ENCODE measurements at regions of chr9 and their contacts with region 1.

Region 1: GRCh38 chr9:6412487-6413364 is at the start of gene UHRF2:
- DNase-seq: peak; percentile 97 to 99
- H3K4me3 ChIP-seq: peak within 1 kb of the TSS; percentile 97 to 98
- H3K27ac ChIP-seq: peak within 1 kb of the TSS; percentile 86 to 92
- H3K4me1 ChIP-seq: peaks cover 6% of the 10 kb centered on the region in 2 donors
- H3K27me3 ChIP-seq: no peaks in the 10 kb centered on the region
- CTCF ChIP-seq: peak in 1 of 3 experiments; percentile 21
- total RNA-seq, gene UHRF2: 22.8 TPM

Region 2: DNA sequence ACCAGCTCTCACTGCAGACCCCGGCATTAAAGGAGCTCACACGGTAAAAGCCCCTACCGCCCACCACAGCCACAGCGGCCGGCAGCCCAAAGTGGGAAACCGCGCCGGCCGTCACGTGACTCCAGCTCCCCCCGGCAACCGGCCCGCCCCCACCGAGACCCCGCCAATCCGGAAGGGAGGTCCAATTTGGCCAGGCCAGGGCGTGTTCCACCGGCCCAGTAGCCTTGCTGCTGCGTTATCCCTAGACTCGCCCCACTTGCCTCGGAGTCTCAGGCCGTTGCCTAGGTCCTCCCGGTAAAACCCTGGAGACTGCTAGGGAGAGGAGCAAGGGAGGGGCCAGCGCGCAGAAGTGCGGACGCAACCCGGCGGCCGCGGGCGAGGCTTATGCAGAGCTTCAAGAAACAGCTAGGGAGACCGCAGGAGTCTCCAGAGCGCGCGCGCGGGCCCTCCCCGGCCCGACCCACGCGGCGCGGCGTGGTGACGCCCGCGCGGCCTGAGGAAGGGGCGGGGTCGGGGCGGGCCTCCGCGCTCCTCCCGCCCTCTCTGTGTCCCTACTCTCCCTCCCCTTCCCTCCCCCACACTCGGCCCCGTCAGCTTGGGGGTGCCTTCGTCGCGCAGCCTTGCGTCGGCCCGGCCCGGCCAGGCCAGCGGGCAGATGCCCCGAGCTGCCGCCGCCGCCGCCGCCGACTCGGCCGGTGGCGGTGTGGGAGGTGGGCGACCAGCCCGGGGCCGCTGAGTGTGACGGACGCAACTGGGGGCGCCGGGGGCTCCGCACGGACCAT is 784.0 kb before region 1 on chr9 and contains the start of gene RIC1:
- intact Hi-C with region 1: loop called (anchors 10 kb)
- DNase-seq: peak; percentile 77 to 95
- H3K4me3 ChIP-seq: peak within 1 kb of the TSS; percentile 93 to 98
- H3K27ac ChIP-seq: peak within 1 kb of the TSS; percentile 95 to 99
- H3K4me1 ChIP-seq: peaks cover 5 to 43% of the 10 kb centered on the region in 2 donors
- H3K27me3 ChIP-seq: no peaks in the 10 kb centered on the region
- CTCF ChIP-seq: no peak
- total RNA-seq, gene RIC1: 46.7 TPM

Region 3: GRCh38 chr9:6126374-6126773 is 286.4 kb before region 1 on chr9:
- intact Hi-C with region 1: no loop called
- DNase-seq: no peak
- H3K4me3 ChIP-seq: no peak overlapping the region
- H3K27ac ChIP-seq: no peak overlapping the region
- H3K4me1 ChIP-seq: no peaks in the 10 kb centered on the region
- H3K27me3 ChIP-seq: no peaks in the 10 kb centered on the region
- CTCF ChIP-seq: no peak

Region 4: DNA sequence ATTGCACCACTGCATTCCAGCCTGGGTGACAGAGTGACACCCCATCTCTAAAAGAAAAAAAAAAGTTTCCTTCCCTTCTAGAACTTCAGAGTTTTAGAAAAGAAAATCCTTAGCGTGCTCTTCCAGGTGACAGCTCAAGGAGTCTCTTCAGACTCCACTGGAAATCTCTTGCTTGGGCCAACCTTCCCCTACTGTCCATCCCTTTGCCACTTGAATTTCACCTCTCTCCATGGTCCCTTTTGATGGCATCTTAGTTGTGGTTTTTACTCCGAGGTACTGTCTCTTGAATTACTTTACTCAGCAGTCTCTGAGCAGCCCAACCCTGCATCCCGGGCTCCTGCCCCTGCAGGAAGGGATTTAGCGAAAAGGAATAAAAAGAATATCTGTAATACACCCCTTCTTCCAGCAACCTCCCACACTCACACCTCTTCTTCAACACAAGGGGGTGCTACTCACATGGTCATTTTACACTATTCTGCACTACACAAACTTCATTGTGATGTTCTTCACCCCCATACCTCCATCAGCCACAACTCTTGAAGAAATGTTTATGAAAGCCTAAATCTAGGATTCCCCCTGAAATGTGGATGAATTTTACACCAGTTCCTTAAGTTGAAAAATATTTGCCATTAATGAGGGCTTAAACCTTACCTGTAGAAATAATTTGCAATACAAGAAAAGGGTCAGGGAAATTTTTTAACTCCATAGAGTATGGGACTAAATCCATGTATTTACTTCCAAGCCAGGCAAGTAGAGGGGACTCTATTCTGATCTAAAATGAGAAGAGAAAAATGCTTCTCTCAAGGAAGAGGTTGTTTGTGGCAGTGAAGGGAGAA is 58.7 kb before region 1 on chr9:
- intact Hi-C with region 1: loop called (anchors 2 kb)
- DNase-seq: no peak
- H3K4me3 ChIP-seq: no peak overlapping the region
- H3K27ac ChIP-seq: no peak overlapping the region
- H3K4me1 ChIP-seq: no peaks in the 10 kb centered on the region
- H3K27me3 ChIP-seq: no peaks in the 10 kb centered on the region
- CTCF ChIP-seq: peak; percentile 52 to 75 (median 63)

Region 5: DNA sequence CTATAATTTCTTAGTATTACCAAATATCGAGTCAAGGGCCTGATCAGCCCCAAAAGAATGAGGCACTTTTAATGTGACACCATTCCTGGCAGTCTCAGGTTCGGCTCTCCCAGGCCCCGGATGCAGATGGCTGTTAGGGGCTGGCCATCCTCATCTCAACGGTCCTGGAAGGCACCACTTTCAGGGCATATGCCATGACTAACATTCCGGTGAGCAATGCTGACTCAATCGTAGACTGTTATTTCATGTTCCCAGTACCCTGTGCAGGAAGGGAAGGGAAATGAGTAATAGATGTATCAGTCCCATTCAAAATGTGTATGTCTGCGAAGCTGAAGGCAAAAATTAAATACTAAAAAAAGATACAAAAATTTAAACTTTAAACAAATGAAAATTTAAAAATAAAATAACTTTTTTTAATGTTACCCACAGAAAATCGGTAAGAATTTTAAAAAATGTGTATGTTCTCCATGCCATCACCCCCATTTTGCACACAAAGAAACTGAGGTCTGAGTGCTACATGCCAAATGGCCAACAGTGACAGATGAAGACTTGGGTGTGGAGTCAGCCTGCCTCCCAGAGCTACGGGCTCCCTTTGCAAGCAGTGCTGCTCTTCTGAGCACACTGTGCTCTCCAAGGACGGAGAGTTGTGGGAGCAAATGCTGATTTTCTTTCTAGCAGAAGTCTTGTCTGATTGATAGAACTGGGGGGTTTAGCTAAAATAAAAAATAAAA is 153.8 kb after region 1 on chr9:
- intact Hi-C with region 1: loop called (anchors 2 kb)
- DNase-seq: peak; percentile 40 to 88
- H3K4me3 ChIP-seq: peak overlapping the region in 1 of 2 donors; percentile 27
- H3K27ac ChIP-seq: peak overlapping the region; percentile 72 to 84
- H3K4me1 ChIP-seq: peaks cover 0 to 14% of the 10 kb centered on the region in 2 donors
- H3K27me3 ChIP-seq: no peaks in the 10 kb centered on the region
- CTCF ChIP-seq: no peak

Region 6: DNA sequence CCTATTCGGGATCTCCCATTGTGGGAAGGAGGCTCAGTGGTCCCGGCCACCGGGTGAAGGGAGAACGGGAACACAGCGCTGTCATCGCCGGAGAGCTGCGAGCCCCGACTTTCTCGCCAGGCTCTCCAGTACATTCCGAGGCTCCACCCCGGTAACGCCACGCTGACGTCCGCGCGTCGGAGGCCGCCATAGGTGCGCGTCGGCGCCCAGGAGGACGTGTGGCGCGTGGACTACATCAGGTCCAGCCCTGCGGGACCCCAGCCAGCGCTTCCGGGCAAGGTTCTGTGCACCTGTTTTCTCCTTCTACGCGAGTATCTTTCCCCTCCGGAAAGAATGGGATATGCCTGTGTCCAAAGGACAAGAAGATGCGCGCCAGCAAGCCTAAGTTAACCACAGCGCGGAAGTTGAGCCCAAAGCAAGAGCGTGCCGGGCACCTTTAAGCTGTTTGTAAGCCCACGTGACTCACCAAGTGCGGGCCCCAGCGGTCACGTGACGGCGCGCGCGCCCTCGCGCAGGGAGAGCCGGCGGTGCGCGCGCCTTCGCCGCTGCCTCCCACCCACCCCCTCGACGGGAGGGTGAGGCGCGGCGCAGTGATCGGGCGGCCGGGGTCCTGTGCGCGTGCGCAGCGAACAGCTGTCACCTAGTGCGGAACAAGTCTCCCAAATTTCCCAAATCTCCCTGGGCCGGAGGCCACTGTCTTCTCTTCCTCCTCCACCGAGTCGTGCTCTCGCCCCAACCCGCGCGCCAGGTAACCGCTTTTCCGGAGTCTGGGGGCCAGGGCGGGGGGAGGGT is 344.9 kb after region 1 on chr9 and contains the start of gene KDM4C:
- intact Hi-C with region 1: loop called (anchors 2 kb)
- DNase-seq: peak; percentile 88 to 98
- H3K4me3 ChIP-seq: peak within 1 kb of the TSS; percentile 66 to 98
- H3K27ac ChIP-seq: peak within 1 kb of the TSS; percentile 98 to 99
- H3K4me1 ChIP-seq: peaks cover 3 to 4% of the 10 kb centered on the region in 2 donors
- H3K27me3 ChIP-seq: no peaks in the 10 kb centered on the region
- CTCF ChIP-seq: no peak
- total RNA-seq, gene KDM4C: 12.7 TPM

Measured in ascending aorta (tissue), 2 donors.